Caco-2 (cell line): ENCODE measurements at regions of chr9 and their contacts with region 1.

Region 1: DNA sequence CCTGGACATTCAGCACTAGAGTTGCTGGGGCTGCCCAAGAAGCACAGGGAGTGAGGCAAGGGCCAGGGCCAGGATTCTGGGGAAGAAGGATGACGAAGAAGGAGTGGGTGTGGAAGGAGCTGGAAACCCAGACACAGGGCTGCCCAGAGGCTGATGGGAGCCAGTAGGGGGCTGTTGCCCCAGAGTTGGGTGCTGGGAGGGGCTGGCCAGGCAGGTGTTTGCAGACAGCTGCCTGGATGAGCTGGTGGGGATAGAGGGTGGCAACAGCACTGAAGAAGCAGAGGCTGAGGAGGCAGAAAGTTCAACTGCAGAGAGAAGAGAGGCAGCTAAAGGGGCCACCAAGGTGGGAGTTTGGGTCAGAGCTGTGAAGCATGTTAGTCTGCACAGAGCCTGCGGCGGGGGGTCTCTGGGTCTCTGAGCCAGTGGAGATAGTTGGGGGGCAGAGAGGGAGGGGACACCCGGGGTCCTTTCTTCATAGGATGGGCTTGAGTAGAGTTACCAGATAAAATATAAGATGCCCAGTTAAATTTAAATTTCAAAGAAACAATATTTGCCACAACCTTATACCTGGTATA is 2.5 kb upstream of the AQP7 start:
- DNase-seq: no peak
- H3K4me3 ChIP-seq: no peak overlapping the region
- H3K4me3 Mint-ChIP-seq: no peak overlapping the region
- H3K27ac Mint-ChIP-seq: no peak overlapping the region
- H3K4me1 ChIP-seq: 0 out of 2 replicates have a peak, but pooled peaks cover 3% of the 10 kb centered on the region
- H3K4me1 Mint-ChIP-seq: peaks cover 11% of the 10 kb centered on the region
- H3K27me3 ChIP-seq: no peaks in the 10 kb centered on the region
- H3K27me3 Mint-ChIP-seq: no peaks in the 10 kb centered on the region
- CTCF ChIP-seq: peak in 1 of 2 experiments; percentile 16

Region 2: GRCh38 chr9:33139421-33140228 is 265.2 kb before region 1 on chr9:
- CTCF ChIA-PET with region 1: no interaction called
- POLR2A ChIA-PET with region 1: no interaction called
- intact Hi-C with region 1: no loop called
- DNase-seq: peak; percentile 52 to 59
- H3K4me3 ChIP-seq: no peak overlapping the region
- H3K4me3 Mint-ChIP-seq: no peak overlapping the region
- H3K27ac Mint-ChIP-seq: no peak overlapping the region
- H3K4me1 ChIP-seq: peaks cover 44% of the 10 kb centered on the region
- H3K4me1 Mint-ChIP-seq: peaks cover 25% of the 10 kb centered on the region
- H3K27me3 ChIP-seq: no peaks in the 10 kb centered on the region
- H3K27me3 Mint-ChIP-seq: no peaks in the 10 kb centered on the region
- CTCF ChIP-seq: no peak

Region 3: GRCh38 chr9:33415501-33416038 is 10.7 kb after region 1 on chr9:
- CTCF ChIA-PET with region 1: interaction called, 32 read pairs
- POLR2A ChIA-PET with region 1: interaction called, 4 read pairs
- intact Hi-C with region 1: loop called (anchors 1 kb)
- DNase-seq: peak; percentile 96 to 98
- H3K4me3 ChIP-seq: no peak overlapping the region
- H3K4me3 Mint-ChIP-seq: peak overlapping the region; percentile 45
- H3K27ac Mint-ChIP-seq: peak overlapping the region; percentile 89
- H3K4me1 ChIP-seq: peaks cover 44% of the 10 kb centered on the region
- H3K4me1 Mint-ChIP-seq: peaks cover 51% of the 10 kb centered on the region
- H3K27me3 ChIP-seq: no peaks in the 10 kb centered on the region
- H3K27me3 Mint-ChIP-seq: no peaks in the 10 kb centered on the region
- CTCF ChIP-seq: peak; percentile 75 to 91

Region 4: GRCh38 chr9:33436440-33436839 is 31.6 kb after region 1 on chr9:
- CTCF ChIA-PET with region 1: no interaction called
- POLR2A ChIA-PET with region 1: no interaction called
- intact Hi-C with region 1: no loop called
- DNase-seq: peak; percentile 49 to 80
- H3K4me3 ChIP-seq: no peak overlapping the region
- H3K4me3 Mint-ChIP-seq: no peak overlapping the region
- H3K27ac Mint-ChIP-seq: peak overlapping the region; percentile 34
- H3K4me1 ChIP-seq: peaks cover 59% of the 10 kb centered on the region
- H3K4me1 Mint-ChIP-seq: peaks cover 54% of the 10 kb centered on the region
- H3K27me3 ChIP-seq: no peaks in the 10 kb centered on the region
- H3K27me3 Mint-ChIP-seq: no peaks in the 10 kb centered on the region
- CTCF ChIP-seq: no peak

Region 5: GRCh38 chr9:33452828-33453271 is 48.0 kb after region 1 on chr9:
- CTCF ChIA-PET with region 1: interaction called, 29 read pairs
- POLR2A ChIA-PET with region 1: no interaction called
- intact Hi-C with region 1: loop called (anchors 1 kb)
- DNase-seq: peak; percentile 71 to 73
- H3K4me3 ChIP-seq: no peak overlapping the region
- H3K4me3 Mint-ChIP-seq: no peak overlapping the region
- H3K27ac Mint-ChIP-seq: no peak overlapping the region
- H3K4me1 ChIP-seq: peaks cover 24% of the 10 kb centered on the region
- H3K4me1 Mint-ChIP-seq: peaks cover 8% of the 10 kb centered on the region
- H3K27me3 ChIP-seq: no peaks in the 10 kb centered on the region
- H3K27me3 Mint-ChIP-seq: no peaks in the 10 kb centered on the region
- CTCF ChIP-seq: peak; percentile 62 to 70

Region 6: DNA sequence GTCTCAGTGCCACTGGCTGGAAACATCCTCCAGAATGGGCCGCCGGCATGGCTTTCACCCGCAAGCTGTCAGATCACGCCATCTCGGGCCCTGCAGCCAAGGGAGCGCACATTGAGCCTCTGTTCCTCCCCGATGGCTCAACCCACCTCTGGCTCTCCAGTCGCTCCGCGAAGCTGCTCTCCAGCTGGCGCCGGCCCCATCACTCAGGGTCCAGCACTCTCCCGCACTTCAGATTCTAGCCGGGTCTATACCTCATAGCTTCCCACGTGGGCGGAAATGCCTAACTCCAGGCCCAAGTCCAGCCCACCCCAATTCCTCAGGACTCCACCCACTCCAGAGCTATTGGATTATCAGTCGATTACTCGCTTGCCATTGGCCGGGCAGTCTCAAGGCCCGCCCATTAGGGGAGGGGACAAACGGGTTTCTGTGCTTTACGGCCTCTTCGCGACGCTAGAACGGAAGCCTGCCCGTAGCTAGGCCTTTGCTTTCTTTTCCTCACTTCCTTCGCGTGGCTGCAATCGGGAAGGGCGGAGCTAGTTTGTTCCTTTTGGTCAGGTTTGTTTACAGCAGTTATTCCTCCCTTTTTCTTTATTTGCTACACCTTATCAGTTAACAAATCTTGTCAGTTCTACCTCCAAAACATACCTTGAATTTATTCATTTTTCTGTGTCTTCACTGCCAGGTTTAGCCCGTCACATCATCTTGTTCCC is 68.9 kb after region 1 on chr9 and contains the start of gene NOL6:
- CTCF ChIA-PET with region 1: interaction called, 12 read pairs
- POLR2A ChIA-PET with region 1: no interaction called
- intact Hi-C with region 1: no loop called
- DNase-seq: peak; percentile 98 to 99
- H3K4me3 ChIP-seq: peak within 1 kb of the TSS; percentile 100
- H3K4me3 Mint-ChIP-seq: peak within 1 kb of the TSS; percentile 91
- H3K27ac Mint-ChIP-seq: peak within 1 kb of the TSS; percentile 88
- H3K4me1 ChIP-seq: peaks cover 8% of the 10 kb centered on the region; the same call in 1 of the 2 replicates
- H3K4me1 Mint-ChIP-seq: peaks cover 10% of the 10 kb centered on the region
- H3K27me3 ChIP-seq: no peaks in the 10 kb centered on the region
- H3K27me3 Mint-ChIP-seq: no peaks in the 10 kb centered on the region
- CTCF ChIP-seq: no peak
- total RNA-seq, gene NOL6: 47.2 and 52.1 TPM in 2 replicates

Region 7: GRCh38 chr9:33623658-33624586 is 219.0 kb after region 1 on chr9:
- CTCF ChIA-PET with region 1: interaction called, 6 read pairs
- POLR2A ChIA-PET with region 1: no interaction called
- intact Hi-C with region 1: loop called (anchors 5 kb)
- DNase-seq: peak; percentile 71 to 84
- H3K4me3 ChIP-seq: no peak overlapping the region
- H3K4me3 Mint-ChIP-seq: no peak overlapping the region
- H3K27ac Mint-ChIP-seq: no peak overlapping the region
- H3K4me1 ChIP-seq: no peaks in the 10 kb centered on the region
- H3K4me1 Mint-ChIP-seq: peaks cover 13% of the 10 kb centered on the region
- H3K27me3 ChIP-seq: no peaks in the 10 kb centered on the region; the same call in 1 of the 2 replicates
- H3K27me3 Mint-ChIP-seq: peaks cover 8% of the 10 kb centered on the region
- CTCF ChIP-seq: peak; percentile 82 to 89